ENCODE measurements at regions of chr16 and their contacts with region 1.

Region 1: GRCh38 chr16:53266156-53266555 is 168.1 kb upstream of the RBL2 start:
- H3K4me3 Mint-ChIP-seq: no peak overlapping the region
- H3K27ac Mint-ChIP-seq: no peak overlapping the region
- H3K4me1 Mint-ChIP-seq: no peaks in the 10 kb centered on the region
- H3K27me3 Mint-ChIP-seq: no peaks in the 10 kb centered on the region

Region 2: GRCh38 chr16:53207810-53208752 is 58.1 kb before region 1 on chr16:
- intact Hi-C with region 1: no loop called
- H3K4me3 Mint-ChIP-seq: peak overlapping the region; percentile 76
- H3K27ac Mint-ChIP-seq: peak overlapping the region; percentile 94
- H3K4me1 Mint-ChIP-seq: peaks cover 23% of the 10 kb centered on the region
- H3K27me3 Mint-ChIP-seq: no peaks in the 10 kb centered on the region

Region 3: DNA sequence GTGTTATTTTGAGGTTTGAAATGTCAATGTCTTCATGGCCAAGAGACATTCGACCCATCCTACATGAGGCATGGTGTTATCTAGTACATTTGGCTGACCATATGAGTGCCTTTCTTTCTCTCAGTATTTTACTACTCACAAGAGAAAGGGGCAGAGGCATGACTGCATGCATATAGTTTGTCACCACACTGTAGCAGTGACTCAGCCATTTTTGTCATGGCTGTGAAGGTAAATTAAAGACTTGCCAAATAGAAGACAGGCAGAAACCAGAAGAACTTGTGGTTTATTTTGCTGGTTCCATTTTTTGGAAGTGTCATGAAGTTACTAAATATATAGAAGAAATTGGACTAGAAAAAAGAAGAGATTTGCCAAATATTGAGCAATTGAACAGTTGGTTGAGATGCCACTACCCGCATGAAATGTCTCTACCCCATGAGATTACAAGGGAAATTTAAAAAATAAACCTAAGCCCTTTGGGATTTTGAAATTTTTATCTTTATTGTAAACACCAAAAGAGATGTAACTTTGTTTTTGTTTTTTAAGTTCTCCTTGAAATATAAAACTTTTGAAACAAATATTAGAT is 41.1 kb before region 1 on chr16:
- intact Hi-C with region 1: loop called (anchors 5 kb)
- H3K4me3 Mint-ChIP-seq: no peak overlapping the region
- H3K27ac Mint-ChIP-seq: no peak overlapping the region
- H3K4me1 Mint-ChIP-seq: no peaks in the 10 kb centered on the region
- H3K27me3 Mint-ChIP-seq: no peaks in the 10 kb centered on the region